ENCODE measurements at regions of chr7 and their contacts with region 1.

Region 1: DNA sequence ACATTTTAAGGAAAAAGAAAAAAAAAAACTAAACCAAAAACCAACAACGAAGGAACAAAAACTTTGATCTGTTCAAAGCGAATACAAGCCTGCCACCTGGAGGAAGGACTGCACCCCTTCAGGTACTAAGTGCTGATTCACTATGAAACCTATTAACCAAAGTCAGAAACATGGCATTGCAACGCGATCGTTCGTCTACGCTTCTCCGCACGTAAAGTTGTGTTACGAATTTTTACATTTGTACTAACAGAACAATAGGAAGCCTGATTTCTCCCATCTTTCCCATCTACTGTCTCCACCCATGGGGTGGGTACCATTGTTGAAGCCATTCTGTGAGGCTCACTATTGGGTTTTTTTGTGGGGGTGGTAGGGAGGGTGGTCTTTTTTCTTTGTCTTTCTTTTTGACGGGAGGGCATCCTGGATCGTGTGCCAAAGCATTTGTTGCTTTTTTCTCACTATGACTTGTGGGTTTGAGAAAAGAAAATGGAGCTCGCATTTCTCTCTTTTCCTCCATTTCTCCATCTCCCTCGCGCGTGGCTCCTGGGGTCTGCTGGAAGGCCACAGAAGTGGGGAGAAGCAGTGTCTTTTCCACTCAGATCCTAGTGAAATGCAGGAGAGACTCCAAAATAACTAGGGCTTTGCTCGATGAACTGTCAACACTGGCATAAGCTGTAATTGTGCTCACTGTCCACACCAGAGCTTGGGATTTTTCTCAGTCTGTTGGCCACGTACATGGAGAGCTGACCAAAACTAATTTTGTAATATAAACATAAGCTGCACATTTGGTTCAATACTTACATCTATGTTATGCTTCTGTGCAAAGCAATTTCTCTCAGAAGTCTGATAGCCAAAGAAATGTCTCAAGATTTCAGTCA is 100.9 kb upstream of the YAE1 start:
- DNase-seq: peak; percentile 6
- H3K4me3 ChIP-seq: no peak overlapping the region
- H3K27me3 ChIP-seq: peaks cover 1% of the 10 kb centered on the region
- CTCF ChIP-seq: peak; percentile 78

Region 2: DNA sequence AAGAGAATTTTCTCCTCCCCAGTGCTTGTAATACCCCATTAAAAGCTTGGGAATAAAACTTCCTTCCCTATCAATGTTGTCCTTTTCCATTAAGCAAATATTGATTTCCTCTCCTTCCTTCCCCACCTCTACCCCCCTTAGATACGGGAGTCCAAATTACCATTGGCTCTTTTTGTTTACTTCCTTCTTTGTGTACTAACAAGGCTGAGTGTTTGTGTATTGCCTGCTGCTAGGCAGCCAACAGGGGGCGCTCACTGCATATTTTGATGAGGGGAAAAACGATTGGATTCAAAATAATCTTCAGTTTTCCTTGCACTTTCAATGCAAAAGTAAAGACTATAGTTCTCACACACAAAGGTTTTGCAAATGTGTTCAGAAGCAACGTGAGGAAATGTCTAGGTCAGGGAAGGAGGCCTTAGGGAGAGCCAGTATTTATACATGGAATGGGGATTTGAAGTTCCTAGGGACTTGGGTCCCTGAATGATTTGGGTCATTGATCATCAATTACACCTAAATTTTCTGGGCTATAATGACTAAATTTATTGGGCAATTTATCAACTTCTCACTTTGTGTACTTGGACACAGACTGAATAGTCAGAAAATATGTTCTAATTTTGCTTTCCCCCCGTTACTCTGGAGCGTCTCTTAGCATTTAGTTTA is 532.7 kb before region 1 on chr7:
- CTCF ChIA-PET with region 1: interaction called, 10 read pairs
- POLR2A ChIA-PET with region 1: no interaction called
- DNase-seq: no peak
- H3K4me3 ChIP-seq: no peak overlapping the region
- H3K27me3 ChIP-seq: no peaks in the 10 kb centered on the region; the same call in 1 of the 2 replicates
- CTCF ChIP-seq: peak; percentile 93

Region 3: DNA sequence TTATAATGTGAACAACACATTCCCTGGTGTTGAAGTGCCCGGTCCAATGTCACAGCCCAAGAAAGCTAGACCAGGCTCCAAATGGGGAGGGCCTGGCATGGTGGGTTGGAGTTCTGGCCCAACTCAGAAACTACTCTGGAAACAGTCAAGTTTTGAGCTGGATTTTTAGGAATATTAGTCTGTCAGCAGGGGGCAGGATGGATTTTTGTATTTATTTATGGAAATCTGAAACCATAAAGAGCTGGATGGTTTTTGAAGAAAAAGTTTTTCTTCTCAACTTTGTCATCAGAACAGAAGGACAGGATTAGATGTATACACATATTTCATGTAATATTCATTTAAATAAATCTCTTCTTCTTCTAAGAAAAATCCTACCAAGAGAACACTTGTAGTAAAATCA is 390.1 kb before region 1 on chr7:
- CTCF ChIA-PET with region 1: interaction called, 12 read pairs
- POLR2A ChIA-PET with region 1: no interaction called
- DNase-seq: no peak
- H3K4me3 ChIP-seq: no peak overlapping the region
- H3K27me3 ChIP-seq: no peaks in the 10 kb centered on the region
- CTCF ChIP-seq: 0 out of 2 replicates have a peak, but pooled peaks have one; percentile 7

Region 4: GRCh38 chr7:39453743-39454355 is 11.4 kb before region 1 on chr7:
- CTCF ChIA-PET with region 1: interaction called, 18 read pairs
- POLR2A ChIA-PET with region 1: no interaction called
- DNase-seq: no peak
- H3K4me3 ChIP-seq: no peak overlapping the region
- H3K27me3 ChIP-seq: peaks cover 1% of the 10 kb centered on the region; the same call in 1 of the 2 replicates
- CTCF ChIP-seq: peak; percentile 87